Ascending aorta (tissue), 2 donors: ENCODE measurements at regions of chr3 and their contacts with region 1.

Region 1: GRCh38 chr3:29525254-29525881 is 244.5 kb downstream of the RBMS3 start:
- DNase-seq: peak in 1 of 2 donors; percentile 89
- H3K4me3 ChIP-seq: peak overlapping the region; percentile 18 to 33
- H3K27ac ChIP-seq: peak overlapping the region; percentile 75 to 80
- H3K4me1 ChIP-seq: peaks cover 5 to 34% of the 10 kb centered on the region in 2 donors
- H3K27me3 ChIP-seq: no peaks in the 10 kb centered on the region
- CTCF ChIP-seq: no peak

Region 2: GRCh38 chr3:29335438-29335837 is 189.9 kb before region 1 on chr3:
- intact Hi-C with region 1: loop called (anchors 5 kb)
- DNase-seq: peak; percentile 22 to 95
- H3K4me3 ChIP-seq: peak overlapping the region; percentile 32 to 35
- H3K27ac ChIP-seq: peak overlapping the region; percentile 65 to 88
- H3K4me1 ChIP-seq: peaks cover 0 to 69% of the 10 kb centered on the region in 2 donors
- H3K27me3 ChIP-seq: no peaks in the 10 kb centered on the region
- CTCF ChIP-seq: no peak

Region 3: DNA sequence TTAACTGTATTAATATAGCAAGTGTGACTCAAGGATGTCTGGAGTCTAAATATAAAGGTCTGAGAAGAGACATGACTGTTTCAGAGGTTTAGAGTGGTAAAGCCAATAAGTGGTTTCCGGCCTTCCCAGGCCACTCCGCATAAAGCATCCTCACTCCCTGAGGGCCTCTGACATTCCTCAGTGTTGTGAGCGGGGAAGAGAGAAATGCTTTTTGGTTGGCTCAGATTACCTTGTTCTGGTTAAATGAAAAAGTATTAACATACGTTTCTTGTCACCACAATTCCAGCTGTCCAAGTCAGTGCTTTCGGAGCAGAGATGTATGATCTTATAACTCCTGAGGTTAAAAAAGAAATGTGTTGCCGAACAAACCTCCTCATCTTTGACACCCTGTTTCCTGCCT is 140.7 kb before region 1 on chr3:
- intact Hi-C with region 1: loop called (anchors 1 kb)
- DNase-seq: peak in 1 of 2 donors; percentile 67
- H3K4me3 ChIP-seq: peak overlapping the region in 1 of 2 donors; percentile 9
- H3K27ac ChIP-seq: peak overlapping the region; percentile 77 to 84
- H3K4me1 ChIP-seq: peaks cover 2 to 37% of the 10 kb centered on the region in 2 donors
- H3K27me3 ChIP-seq: no peaks in the 10 kb centered on the region
- CTCF ChIP-seq: no peak

Region 4: GRCh38 chr3:29453284-29454001 is 71.9 kb before region 1 on chr3:
- intact Hi-C with region 1: loop called (anchors 5 kb)
- DNase-seq: peak in 1 of 2 donors; percentile 72
- H3K4me3 ChIP-seq: peak overlapping the region in 1 of 2 donors; percentile 40
- H3K27ac ChIP-seq: peak overlapping the region; percentile 46 to 61
- H3K4me1 ChIP-seq: peaks cover 8 to 16% of the 10 kb centered on the region in 2 donors
- H3K27me3 ChIP-seq: no peaks in the 10 kb centered on the region
- CTCF ChIP-seq: no peak

Region 5: GRCh38 chr3:29582273-29582672 is 56.9 kb after region 1 on chr3:
- intact Hi-C with region 1: no loop called
- DNase-seq: no peak
- H3K4me3 ChIP-seq: no peak overlapping the region
- H3K27ac ChIP-seq: no peak overlapping the region
- H3K4me1 ChIP-seq: peaks cover 0 to 7% of the 10 kb centered on the region in 2 donors
- H3K27me3 ChIP-seq: no peaks in the 10 kb centered on the region
- CTCF ChIP-seq: no peak

Region 6: DNA sequence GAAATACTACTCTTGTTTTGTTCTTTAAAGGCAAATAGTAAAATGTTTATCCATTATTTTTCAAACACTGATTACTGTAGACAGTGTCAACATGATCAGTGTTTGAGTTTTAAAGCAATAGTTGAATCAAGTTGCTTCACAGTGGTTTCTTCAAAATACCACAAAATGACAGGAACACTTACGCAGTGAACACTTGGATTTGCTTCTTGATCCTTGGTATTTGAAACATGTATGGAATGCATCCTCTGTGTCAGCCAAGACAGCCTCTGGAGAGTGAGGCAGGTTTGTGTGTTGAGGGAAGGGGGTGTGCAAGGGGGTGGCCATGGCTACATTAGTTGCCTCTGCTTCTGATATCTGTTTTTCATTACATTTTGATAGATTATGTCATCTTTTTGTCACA is 168.5 kb after region 1 on chr3:
- intact Hi-C with region 1: loop called (anchors 5 kb)
- DNase-seq: no peak
- H3K4me3 ChIP-seq: no peak overlapping the region
- H3K27ac ChIP-seq: peak overlapping the region; percentile 2 to 41
- H3K4me1 ChIP-seq: peaks cover 3 to 30% of the 10 kb centered on the region in 2 donors
- H3K27me3 ChIP-seq: no peaks in the 10 kb centered on the region
- CTCF ChIP-seq: no peak

Region 7: GRCh38 chr3:29759411-29760225 is 234.2 kb after region 1 on chr3:
- intact Hi-C with region 1: loop called (anchors 5 kb)
- DNase-seq: no peak
- H3K4me3 ChIP-seq: peak overlapping the region in 1 of 2 donors; percentile 21
- H3K27ac ChIP-seq: peak overlapping the region; percentile 76 to 81
- H3K4me1 ChIP-seq: peaks cover 4 to 35% of the 10 kb centered on the region in 2 donors
- H3K27me3 ChIP-seq: no peaks in the 10 kb centered on the region
- CTCF ChIP-seq: no peak